Activated naive CD4-positive, alpha-beta T cell treated with anti-CD3 and anti-CD28 coated beads for 36 hours (primary cell): ENCODE measurements at regions of chr2 and their contacts with region 1.

Region 1: GRCh38 chr2:223727562-223727961 is 109.8 kb downstream of the AP1S3 start:
- DNase-seq: peak; percentile 52
- H3K4me3 Mint-ChIP-seq: no peak overlapping the region
- H3K27ac Mint-ChIP-seq: no peak overlapping the region
- H3K4me1 Mint-ChIP-seq: no peaks in the 10 kb centered on the region
- H3K27me3 Mint-ChIP-seq: peaks cover 5% of the 10 kb centered on the region

Region 2: GRCh38 chr2:223692191-223692947 is 35.2 kb before region 1 on chr2:
- CTCF ChIA-PET with region 1: no interaction called
- intact Hi-C with region 1: loop called (anchors 5 kb)
- DNase-seq: peak; percentile 27
- H3K4me3 Mint-ChIP-seq: no peak overlapping the region
- H3K27ac Mint-ChIP-seq: no peak overlapping the region
- H3K4me1 Mint-ChIP-seq: peaks cover 5% of the 10 kb centered on the region
- H3K27me3 Mint-ChIP-seq: peaks cover 9% of the 10 kb centered on the region

Region 3: GRCh38 chr2:223797811-223798721 is 70.5 kb after region 1 on chr2:
- CTCF ChIA-PET with region 1: no interaction called
- intact Hi-C with region 1: loop called (anchors 1 kb)
- DNase-seq: no peak
- H3K4me3 Mint-ChIP-seq: no peak overlapping the region
- H3K27ac Mint-ChIP-seq: no peak overlapping the region
- H3K4me1 Mint-ChIP-seq: peaks cover 8% of the 10 kb centered on the region
- H3K27me3 Mint-ChIP-seq: no peaks in the 10 kb centered on the region

Region 4: GRCh38 chr2:223860809-223861738 is 133.5 kb after region 1 on chr2:
- CTCF ChIA-PET with region 1: interaction called, 3 read pairs
- intact Hi-C with region 1: loop called (anchors 2 kb)
- DNase-seq: no peak
- H3K4me3 Mint-ChIP-seq: no peak overlapping the region
- H3K27ac Mint-ChIP-seq: no peak overlapping the region
- H3K4me1 Mint-ChIP-seq: peaks cover 14% of the 10 kb centered on the region
- H3K27me3 Mint-ChIP-seq: no peaks in the 10 kb centered on the region

Region 5: GRCh38 chr2:224284134-224284946 is 556.8 kb after region 1 on chr2:
- CTCF ChIA-PET with region 1: interaction called, 4 read pairs
- intact Hi-C with region 1: loop called (anchors 1 kb)
- DNase-seq: peak; percentile 50
- H3K4me3 Mint-ChIP-seq: no peak overlapping the region
- H3K27ac Mint-ChIP-seq: no peak overlapping the region
- H3K4me1 Mint-ChIP-seq: no peaks in the 10 kb centered on the region
- H3K27me3 Mint-ChIP-seq: peaks cover 25% of the 10 kb centered on the region